MCF 10A (cell line): ENCODE measurements at regions of chr7 and their contacts with region 1.

Region 1: GRCh38 chr7:25894902-25895791 is 256.9 kb upstream of the NFE2L3 start:
- DNase-seq: peak; percentile 6
- H3K4me3 Mint-ChIP-seq: peak overlapping the region; percentile 45
- H3K27ac Mint-ChIP-seq: no peak overlapping the region
- H3K4me1 Mint-ChIP-seq: peaks cover 10% of the 10 kb centered on the region
- H3K27me3 Mint-ChIP-seq: no peaks in the 10 kb centered on the region
- CTCF ChIP-seq: peak; percentile 28

Region 2: DNA sequence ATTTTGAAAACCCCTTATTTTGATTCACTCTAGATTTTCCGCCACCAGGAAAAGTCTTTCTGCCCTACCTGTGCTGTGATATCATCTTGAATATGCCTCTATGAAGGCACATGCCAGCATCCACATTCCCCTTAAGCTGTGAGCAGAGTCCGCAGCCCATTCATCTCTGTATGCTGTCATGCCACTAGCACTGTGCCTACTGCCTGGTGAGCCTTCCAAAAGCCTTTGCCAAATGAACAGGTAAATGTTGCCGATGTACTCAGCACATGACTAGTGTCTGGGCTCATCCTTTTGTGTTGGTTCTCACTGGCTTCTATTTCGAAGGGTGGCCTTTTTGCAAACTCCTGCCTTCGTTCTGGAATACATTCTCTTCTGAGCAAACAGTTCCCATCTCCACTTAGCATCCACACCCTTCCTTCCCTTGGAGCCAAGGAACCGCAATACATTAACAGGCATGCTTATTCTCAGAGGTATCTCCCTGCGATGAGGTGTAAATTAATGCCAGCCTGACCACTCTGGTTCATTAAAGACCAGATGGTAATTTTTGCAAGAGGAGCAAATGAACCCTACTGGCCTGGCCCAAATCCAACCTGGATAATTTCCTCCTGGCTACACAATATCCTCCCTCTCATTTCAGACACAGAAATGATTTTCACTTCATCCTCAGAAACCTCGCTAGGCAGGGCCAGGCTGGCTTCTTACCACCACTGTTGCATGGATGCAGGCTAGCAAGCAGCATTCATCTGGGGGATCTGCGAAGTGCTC is 82.9 kb before region 1 on chr7:
- CTCF ChIA-PET with region 1: no interaction called
- POLR2A ChIA-PET with region 1: no interaction called
- intact Hi-C with region 1: no loop called
- DNase-seq: no peak
- H3K4me3 Mint-ChIP-seq: no peak overlapping the region
- H3K27ac Mint-ChIP-seq: no peak overlapping the region
- H3K4me1 Mint-ChIP-seq: no peaks in the 10 kb centered on the region
- H3K27me3 Mint-ChIP-seq: peaks cover 8% of the 10 kb centered on the region
- CTCF ChIP-seq: no peak

Region 3: DNA sequence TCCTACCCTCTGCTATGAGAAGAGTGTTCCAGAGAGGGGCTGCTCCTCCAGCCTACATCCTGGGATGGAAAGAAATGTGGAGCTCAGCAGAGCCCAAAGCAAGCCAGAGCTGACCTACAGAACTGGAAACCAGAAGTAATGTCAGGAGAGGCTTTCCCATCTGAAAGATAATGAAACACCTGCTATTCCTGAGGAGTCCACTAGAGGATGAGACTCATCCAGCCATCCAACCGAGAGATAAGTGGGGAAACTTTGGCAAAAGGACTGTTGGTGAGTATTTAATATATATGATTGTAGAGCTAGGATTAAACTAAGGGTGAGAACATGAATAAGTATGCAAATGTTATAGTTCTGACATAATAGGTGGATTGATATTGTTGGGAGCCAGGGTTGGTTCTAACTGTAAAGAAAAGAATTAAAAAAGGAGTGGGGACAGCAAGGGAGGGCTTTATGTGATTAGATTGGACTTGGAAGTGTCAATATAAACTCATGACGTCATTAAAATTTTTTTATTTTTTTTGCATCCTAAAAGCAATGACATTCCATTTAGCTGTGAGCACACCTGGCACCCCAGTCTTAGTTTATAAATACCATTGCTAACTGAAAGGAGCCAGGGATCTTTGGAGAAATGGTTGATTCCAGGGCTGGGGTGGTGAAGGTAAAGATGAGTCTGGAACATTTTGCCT is 55.9 kb before region 1 on chr7:
- CTCF ChIA-PET with region 1: no interaction called
- POLR2A ChIA-PET with region 1: no interaction called
- intact Hi-C with region 1: no loop called
- DNase-seq: peak; percentile 28
- H3K4me3 Mint-ChIP-seq: no peak overlapping the region
- H3K27ac Mint-ChIP-seq: no peak overlapping the region
- H3K4me1 Mint-ChIP-seq: no peaks in the 10 kb centered on the region
- H3K27me3 Mint-ChIP-seq: peaks cover 20% of the 10 kb centered on the region
- CTCF ChIP-seq: peak; percentile 36

Region 4: DNA sequence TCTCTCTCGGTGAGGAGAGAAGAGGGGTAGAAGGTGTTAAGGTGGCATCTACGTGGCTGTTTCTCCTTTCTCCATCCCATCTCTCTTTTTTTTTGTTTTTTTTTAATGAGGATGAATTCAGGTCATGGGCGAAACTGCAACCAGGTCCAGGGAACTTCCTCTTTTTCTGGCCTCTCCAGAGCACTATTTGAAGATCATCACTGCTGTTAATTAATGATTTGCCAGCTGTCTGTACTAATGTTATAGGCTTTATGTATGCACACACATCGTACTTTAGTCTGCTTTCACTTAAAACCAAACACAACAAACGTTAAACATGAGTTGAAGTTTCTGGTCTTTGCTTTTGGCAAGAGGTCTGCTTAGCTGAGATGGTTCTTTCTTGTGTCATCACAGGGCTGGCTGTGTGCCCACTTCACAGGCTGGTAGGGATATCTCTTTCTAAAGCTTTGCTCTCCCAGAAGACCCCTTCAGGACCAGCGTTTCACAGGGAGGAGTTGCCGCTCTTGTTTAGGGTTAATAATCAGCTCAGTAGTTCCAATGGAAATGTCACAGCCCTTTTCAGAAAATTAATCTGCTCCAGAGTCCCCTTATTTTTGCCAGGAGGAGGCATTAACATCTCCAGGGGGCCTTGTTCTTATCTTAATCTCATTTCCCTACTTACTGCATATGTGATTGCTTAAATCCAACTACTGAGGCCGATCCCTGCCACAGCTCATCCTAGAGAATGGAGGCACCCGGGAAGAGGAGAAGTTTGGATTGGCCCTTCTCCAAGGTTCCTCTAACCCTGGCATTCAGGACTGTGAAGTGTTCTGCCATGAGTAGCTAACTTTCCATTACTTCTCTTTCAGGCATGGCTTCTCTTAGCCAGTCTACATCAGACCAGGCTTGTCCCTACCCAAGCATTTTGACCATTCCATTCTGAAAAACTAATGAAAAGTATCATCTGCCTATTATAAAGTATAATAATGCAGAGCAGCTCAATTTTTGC is 17.1 kb before region 1 on chr7:
- CTCF ChIA-PET with region 1: interaction called, 25 read pairs
- POLR2A ChIA-PET with region 1: interaction called, 3 read pairs
- intact Hi-C with region 1: no loop called
- DNase-seq: no peak
- H3K4me3 Mint-ChIP-seq: no peak overlapping the region
- H3K27ac Mint-ChIP-seq: no peak overlapping the region
- H3K4me1 Mint-ChIP-seq: no peaks in the 10 kb centered on the region
- H3K27me3 Mint-ChIP-seq: peaks cover 94% of the 10 kb centered on the region
- CTCF ChIP-seq: no peak

Region 5: DNA sequence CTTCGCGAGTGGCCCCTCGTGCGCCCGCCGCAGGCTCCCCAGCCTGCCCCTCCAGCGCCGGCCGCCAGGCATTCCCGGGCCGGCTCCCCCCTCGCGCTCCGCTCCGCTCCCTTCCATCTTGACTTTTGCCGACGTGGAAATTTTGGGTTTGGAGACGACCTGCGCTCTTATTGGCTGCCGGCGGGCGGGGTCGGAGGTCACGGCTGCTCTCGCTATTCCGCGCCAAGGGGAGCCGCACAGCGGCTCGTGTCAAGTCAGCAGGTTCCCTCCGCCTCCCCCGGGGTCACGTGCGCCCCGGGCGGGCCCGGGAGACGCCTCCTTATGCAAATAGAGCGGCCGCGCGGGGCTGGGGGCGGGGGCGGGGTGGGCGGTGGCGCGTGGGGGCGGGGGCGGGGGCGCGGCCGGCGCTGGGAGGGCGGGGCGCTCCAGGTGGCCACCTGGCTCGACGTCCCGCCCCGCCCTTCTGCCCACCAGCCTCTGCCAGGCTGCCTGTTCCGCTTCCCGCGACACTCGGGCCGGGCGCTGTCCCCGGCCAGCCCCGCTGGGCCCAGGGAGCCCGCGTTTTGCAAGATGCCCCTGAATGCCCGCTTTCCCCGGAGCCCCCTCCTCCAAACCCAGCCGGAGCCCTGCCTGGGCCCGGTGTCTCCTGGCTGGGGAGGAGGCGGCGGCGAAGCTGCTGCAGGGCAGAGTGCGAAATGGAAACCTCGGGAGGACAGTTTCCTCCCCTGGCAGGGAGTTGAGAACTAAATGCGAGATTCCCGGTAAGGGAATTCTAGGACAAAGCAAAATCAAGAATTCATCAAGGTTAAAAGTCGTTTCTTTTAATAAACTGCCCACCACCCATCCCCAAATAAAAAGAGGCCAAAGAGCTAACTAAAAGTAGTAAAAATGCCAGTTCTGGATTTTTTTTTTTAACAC is 56.1 kb after region 1 on chr7:
- CTCF ChIA-PET with region 1: interaction called, 5 read pairs
- POLR2A ChIA-PET with region 1: no interaction called
- intact Hi-C with region 1: loop called (anchors 2 kb)
- DNase-seq: peak; percentile 90
- H3K4me3 Mint-ChIP-seq: peak overlapping the region; percentile 85
- H3K27ac Mint-ChIP-seq: peak overlapping the region; percentile 86
- H3K4me1 Mint-ChIP-seq: peaks cover 10% of the 10 kb centered on the region
- H3K27me3 Mint-ChIP-seq: peaks cover 10% of the 10 kb centered on the region
- CTCF ChIP-seq: no peak

Region 6: GRCh38 chr7:26071622-26072456 is 176.7 kb after region 1 on chr7:
- CTCF ChIA-PET with region 1: interaction called, 31 read pairs
- POLR2A ChIA-PET with region 1: interaction called, 3 read pairs
- intact Hi-C with region 1: no loop called
- DNase-seq: no peak
- H3K4me3 Mint-ChIP-seq: no peak overlapping the region
- H3K27ac Mint-ChIP-seq: no peak overlapping the region
- H3K4me1 Mint-ChIP-seq: no peaks in the 10 kb centered on the region
- H3K27me3 Mint-ChIP-seq: no peaks in the 10 kb centered on the region
- CTCF ChIP-seq: no peak

Region 7: GRCh38 chr7:26200444-26201246 is 305.5 kb after region 1 on chr7 and contains the start of gene HNRNPA2B1:
- CTCF ChIA-PET with region 1: interaction called, 24 read pairs
- POLR2A ChIA-PET with region 1: interaction called, 9 read pairs
- intact Hi-C with region 1: loop called (anchors 2 kb)
- DNase-seq: peak; percentile 98
- H3K4me3 Mint-ChIP-seq: peak within 1 kb of the TSS; percentile 98
- H3K27ac Mint-ChIP-seq: peak within 1 kb of the TSS; percentile 99
- H3K4me1 Mint-ChIP-seq: peaks cover 37% of the 10 kb centered on the region
- H3K27me3 Mint-ChIP-seq: no peaks in the 10 kb centered on the region
- CTCF ChIP-seq: no peak
- total RNA-seq, gene HNRNPA2B1: 592 and 646 TPM in 2 replicates

Region 8: DNA sequence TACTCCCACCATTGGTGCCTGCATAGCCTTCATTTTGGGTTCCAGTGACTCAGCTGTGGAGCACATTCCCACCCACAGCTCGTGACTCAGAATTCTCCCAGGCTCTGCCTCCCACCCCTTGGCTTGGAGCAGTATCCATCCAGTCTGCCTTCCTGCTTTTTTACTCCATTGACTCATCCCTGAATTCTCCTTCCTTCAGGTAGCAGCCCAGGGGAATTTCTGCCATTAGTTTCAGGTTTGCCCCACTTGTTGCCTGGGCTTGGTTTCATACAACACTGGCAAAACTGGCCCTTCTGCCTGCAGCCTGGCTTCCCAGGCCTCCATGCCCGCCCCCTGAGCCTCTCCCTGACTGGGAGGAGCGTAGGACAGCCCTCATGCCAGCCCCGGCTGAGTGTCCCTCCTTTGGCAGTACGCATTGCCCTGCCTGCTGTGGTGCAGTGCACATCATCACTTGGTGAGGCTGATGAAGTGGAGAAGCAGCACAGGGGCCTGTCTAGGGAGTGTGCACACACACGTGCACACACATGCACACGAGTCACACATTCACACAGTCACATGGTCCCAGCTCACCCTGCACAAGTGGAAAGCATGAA is 451.6 kb after region 1 on chr7:
- CTCF ChIA-PET with region 1: interaction called, 11 read pairs
- POLR2A ChIA-PET with region 1: no interaction called
- intact Hi-C with region 1: no loop called
- DNase-seq: peak; percentile 80
- H3K4me3 Mint-ChIP-seq: no peak overlapping the region
- H3K27ac Mint-ChIP-seq: no peak overlapping the region
- H3K4me1 Mint-ChIP-seq: peaks cover 20% of the 10 kb centered on the region
- H3K27me3 Mint-ChIP-seq: no peaks in the 10 kb centered on the region
- CTCF ChIP-seq: no peak

Region 9: DNA sequence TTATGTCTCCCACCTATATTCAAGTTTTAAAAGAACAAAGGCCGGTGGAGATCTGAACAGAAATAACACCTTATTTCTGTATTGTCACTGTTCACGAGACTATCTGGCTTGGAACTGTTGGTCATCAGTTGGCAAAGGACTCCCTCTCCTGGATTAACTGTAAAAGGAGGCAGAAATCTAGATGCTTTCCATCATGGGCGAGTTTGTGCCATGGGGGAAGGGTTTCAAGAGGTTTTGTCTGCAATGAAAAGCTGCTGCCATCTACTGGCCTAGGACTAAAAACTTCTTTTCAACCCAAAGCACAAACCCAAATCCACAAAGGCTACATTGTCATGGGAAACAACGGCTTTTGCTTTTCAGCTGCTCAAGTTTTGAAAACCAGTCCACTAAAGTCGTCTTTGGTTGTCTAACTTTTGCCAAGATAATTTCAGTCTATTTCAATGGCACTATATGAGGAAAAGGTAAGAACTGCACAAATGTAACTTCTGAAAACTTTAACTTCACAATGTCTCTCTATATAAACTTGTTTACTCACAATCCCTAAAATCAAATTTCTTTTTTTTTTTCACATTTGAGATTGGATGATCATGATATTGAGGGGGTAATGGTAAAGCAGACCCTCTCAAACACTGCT is 772.5 kb after region 1 on chr7:
- CTCF ChIA-PET with region 1: interaction called, 19 read pairs
- POLR2A ChIA-PET with region 1: no interaction called
- intact Hi-C with region 1: loop called (anchors 1 kb)
- DNase-seq: peak; percentile 96
- H3K4me3 Mint-ChIP-seq: no peak overlapping the region
- H3K27ac Mint-ChIP-seq: no peak overlapping the region
- H3K4me1 Mint-ChIP-seq: peaks cover 16% of the 10 kb centered on the region
- H3K27me3 Mint-ChIP-seq: no peaks in the 10 kb centered on the region
- CTCF ChIP-seq: peak; percentile 90